ENCODE measurements at regions of chr13 and their contacts with region 1.

Region 1: GRCh38 chr13:24160454-24161009 is at the start of gene SPATA13:
- H3K4me3 Mint-ChIP-seq: peak within 1 kb of the TSS; percentile 91
- H3K27ac Mint-ChIP-seq: peak within 1 kb of the TSS; percentile 82
- H3K4me1 Mint-ChIP-seq: peaks cover 18% of the 10 kb centered on the region
- H3K27me3 Mint-ChIP-seq: peaks cover 26% of the 10 kb centered on the region

Region 2: DNA sequence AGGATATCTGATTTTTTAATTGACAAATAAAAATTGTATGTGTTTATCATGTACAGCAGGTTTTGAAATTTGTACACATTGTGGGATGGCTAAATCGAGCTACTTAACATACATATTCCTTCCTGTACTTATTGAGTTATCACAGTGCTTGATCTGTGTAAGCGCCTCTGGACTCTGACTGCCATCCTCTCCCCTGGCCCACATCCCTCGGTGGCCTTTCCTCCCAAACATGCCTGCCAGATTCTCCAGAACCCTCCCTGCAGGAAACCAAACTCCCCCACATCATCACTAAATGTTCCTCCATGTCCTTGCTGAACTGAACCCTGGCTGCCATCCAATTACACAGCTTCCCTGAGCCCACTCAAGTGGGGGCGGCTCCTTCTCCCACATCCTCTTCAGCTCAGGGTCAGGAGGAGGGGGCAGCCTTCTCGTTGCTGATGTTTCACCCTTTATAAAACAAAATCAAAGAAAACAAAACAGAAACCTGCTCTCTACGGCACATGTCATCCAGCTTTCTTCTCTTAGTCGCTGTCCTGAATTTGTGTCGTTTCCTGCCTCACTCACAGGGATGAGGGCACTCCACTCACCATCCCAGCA is 97.2 kb before region 1 on chr13:
- intact Hi-C with region 1: loop called (anchors 10 kb)
- H3K4me3 Mint-ChIP-seq: no peak overlapping the region
- H3K27ac Mint-ChIP-seq: peak overlapping the region; percentile 60
- H3K4me1 Mint-ChIP-seq: peaks cover 44% of the 10 kb centered on the region
- H3K27me3 Mint-ChIP-seq: no peaks in the 10 kb centered on the region

Region 3: GRCh38 chr13:24233351-24233901 is 72.9 kb after region 1 on chr13:
- intact Hi-C with region 1: no loop called
- H3K4me3 Mint-ChIP-seq: no peak overlapping the region
- H3K27ac Mint-ChIP-seq: no peak overlapping the region
- H3K4me1 Mint-ChIP-seq: no peaks in the 10 kb centered on the region
- H3K27me3 Mint-ChIP-seq: no peaks in the 10 kb centered on the region

Measured in dendritic cell treated with granulocyte-macrophage colony-stimulating factor and Interleukin-4, amounts not matched to agents 40 ng/mL and 50 ng/mL, for 4 days (primary cell).